ENCODE measurements at regions of chr9 and their contacts with region 1.

Region 1: DNA sequence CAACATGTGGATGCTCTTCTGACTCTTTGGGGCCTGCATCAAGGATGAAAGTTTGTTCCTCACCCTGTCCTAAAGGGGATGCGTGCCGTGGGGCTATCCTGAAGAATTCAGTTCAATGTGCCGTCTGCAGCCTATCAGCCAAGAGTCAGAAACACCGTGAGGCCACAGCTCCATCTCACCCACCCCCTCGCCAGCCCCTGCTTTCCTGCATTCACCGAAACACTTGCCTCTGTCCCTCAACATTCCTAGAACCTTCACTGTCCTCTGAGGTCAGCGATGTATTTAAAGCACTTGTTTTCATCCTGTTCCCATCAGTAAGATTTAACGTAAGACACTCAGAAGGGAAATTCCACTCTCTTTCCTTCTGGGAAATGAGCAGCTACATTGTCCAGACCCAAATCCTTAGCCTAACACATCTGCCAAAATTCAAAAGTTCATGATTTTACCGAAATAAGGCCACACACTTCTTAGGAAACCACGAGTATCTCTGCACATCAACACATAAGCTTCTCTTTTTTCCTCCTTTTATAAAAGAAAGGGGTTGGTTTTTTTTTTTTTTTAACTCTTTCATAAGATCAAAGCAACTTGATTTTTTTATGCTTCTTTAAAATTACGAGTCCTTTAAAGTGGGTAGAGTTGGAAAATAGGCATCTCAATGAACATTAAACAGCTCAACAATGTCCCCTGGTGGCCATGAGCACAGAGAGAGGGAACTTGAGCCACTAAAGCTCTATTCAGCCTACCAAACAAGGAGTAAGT is 100.7 kb downstream of the SUSD1 start:
- DNase-seq: peak; percentile 34 to 82 (median 70)
- ATAC-seq: peak; percentile 91
- H3K4me3 ChIP-seq: no peak overlapping the region
- H3K4me3 Mint-ChIP-seq: peak overlapping the region; percentile 57
- H3K27ac ChIP-seq: no peak overlapping the region
- H3K27ac Mint-ChIP-seq: peak overlapping the region; percentile 60
- H3K4me1 ChIP-seq: peaks cover 12% of the 10 kb centered on the region
- H3K4me1 Mint-ChIP-seq: peaks cover 18% of the 10 kb centered on the region
- H3K27me3 ChIP-seq: no peaks in the 10 kb centered on the region
- H3K27me3 Mint-ChIP-seq: no peaks in the 10 kb centered on the region
- CTCF ChIP-seq: peak; percentile 96

Region 2: DNA sequence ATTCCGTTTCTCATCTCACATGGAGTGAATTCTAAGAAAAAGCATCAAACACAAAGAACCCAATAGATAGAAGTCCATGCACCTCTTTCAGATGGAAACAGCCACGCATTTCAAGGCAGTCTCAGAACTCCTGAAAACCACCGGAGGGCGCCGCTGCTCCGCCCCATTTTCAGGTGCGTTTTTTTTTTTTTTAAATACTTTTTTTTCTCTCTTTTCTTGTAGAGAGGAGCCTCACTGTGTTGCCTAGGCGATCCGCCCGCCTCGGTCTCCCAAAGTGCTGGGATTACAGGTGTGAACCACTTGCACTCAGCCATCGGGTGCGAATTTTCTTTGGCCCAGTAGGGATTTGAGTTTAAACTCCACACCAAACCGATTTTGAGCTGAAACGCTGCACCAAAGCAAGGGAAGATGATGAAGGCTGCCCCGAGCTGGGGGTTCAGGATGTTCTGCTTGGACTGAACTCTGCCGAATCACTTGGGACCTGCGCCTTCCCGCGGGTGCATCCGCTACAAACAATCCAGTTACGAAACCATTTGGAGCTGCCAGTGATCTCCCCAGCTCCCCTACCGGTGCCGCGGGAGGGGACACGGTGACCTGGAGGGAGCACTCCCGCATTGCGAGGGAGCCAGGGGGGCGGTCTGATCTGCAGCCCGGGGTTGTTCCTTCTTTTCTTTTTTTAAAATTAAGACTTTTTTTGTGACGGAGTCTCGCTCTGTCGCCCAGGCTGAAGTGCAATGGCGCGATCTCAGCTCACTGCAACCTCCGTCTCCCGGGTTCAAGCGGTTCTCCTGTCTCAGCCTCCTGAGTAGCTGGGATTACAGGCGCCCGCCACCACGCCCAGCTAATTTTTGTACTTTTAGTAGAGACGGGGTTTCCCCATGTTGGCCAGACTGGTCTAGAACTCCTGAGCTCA is 476.4 kb before region 1 on chr9:
- CTCF ChIA-PET with region 1: interaction called, 20 read pairs
- POLR2A ChIA-PET with region 1: interaction called, 3 read pairs
- intact Hi-C with region 1: loop called (anchors 1 kb)
- DNase-seq: peak; percentile 9 to 80 (median 62)
- ATAC-seq: peak; percentile 75
- H3K4me3 ChIP-seq: peak overlapping the region; percentile 47 to 66
- H3K4me3 Mint-ChIP-seq: peak overlapping the region; percentile 87
- H3K27ac ChIP-seq: no peak overlapping the region
- H3K27ac Mint-ChIP-seq: no peak overlapping the region
- H3K4me1 ChIP-seq: peaks cover 12% of the 10 kb centered on the region
- H3K4me1 Mint-ChIP-seq: peaks cover 19% of the 10 kb centered on the region
- H3K27me3 ChIP-seq: peaks cover 15 to 16% of the 10 kb centered on the region in 2 experiments
- H3K27me3 Mint-ChIP-seq: peaks cover 41% of the 10 kb centered on the region
- CTCF ChIP-seq: peak; percentile 72

Region 3: GRCh38 chr9:111766066-111766465 is 308.4 kb before region 1 on chr9:
- CTCF ChIA-PET with region 1: interaction called, 146 read pairs
- POLR2A ChIA-PET with region 1: interaction called, 6 read pairs
- intact Hi-C with region 1: no loop called
- DNase-seq: no peak
- ATAC-seq: no peak
- H3K4me3 ChIP-seq: no peak overlapping the region
- H3K4me3 Mint-ChIP-seq: no peak overlapping the region
- H3K27ac ChIP-seq: no peak overlapping the region
- H3K27ac Mint-ChIP-seq: no peak overlapping the region
- H3K4me1 ChIP-seq: no peaks in the 10 kb centered on the region
- H3K4me1 Mint-ChIP-seq: no peaks in the 10 kb centered on the region
- H3K27me3 ChIP-seq: no peaks in the 10 kb centered on the region
- H3K27me3 Mint-ChIP-seq: no peaks in the 10 kb centered on the region
- CTCF ChIP-seq: no peak

Region 4: DNA sequence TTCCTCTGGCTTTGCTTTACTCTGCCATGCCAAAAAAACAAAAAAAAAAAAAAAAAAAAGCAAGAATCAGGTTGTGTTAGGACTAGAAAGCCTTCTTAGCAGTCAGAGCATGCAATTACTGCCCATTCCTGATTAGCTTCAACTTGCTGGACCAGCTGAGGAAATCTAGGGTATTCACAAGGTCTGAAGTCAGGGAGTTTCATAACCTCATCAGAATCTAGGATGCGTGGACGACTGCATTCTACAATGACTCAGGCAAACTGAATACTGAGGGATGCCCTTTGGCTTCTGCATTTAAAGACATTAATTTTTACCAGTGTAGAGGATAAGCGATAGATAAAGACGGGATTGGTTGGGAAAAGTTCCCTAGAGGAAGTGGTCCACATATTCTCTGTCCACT is 240.5 kb before region 1 on chr9:
- CTCF ChIA-PET with region 1: interaction called, 12 read pairs
- POLR2A ChIA-PET with region 1: no interaction called
- intact Hi-C with region 1: loop called in 1 of 2 experiments (anchors 2 kb)
- DNase-seq: no peak
- ATAC-seq: no peak
- H3K4me3 ChIP-seq: no peak overlapping the region
- H3K4me3 Mint-ChIP-seq: no peak overlapping the region
- H3K27ac ChIP-seq: no peak overlapping the region
- H3K27ac Mint-ChIP-seq: no peak overlapping the region
- H3K4me1 ChIP-seq: no peaks in the 10 kb centered on the region
- H3K4me1 Mint-ChIP-seq: no peaks in the 10 kb centered on the region
- H3K27me3 ChIP-seq: no peaks in the 10 kb centered on the region
- H3K27me3 Mint-ChIP-seq: peaks cover 10% of the 10 kb centered on the region
- CTCF ChIP-seq: no peak

Region 5: DNA sequence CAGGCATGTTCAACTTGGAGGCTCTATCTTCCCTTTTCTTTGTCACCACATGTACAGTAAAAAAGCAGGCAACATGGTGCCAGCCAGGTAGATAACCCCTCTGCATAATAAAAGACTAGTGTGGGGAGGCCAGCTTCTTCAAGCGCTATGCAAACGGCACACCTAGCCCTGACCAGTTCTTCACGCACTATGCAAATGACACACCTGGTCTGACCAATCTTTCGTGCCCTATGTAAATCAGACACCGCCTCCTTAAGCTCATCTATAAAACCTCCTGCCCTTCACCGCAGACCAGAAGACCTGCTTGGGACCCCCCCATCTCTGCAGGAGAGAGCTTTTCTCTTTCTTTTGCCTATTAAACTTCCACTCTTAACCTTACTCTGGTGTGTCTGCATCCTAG is 206.0 kb before region 1 on chr9:
- CTCF ChIA-PET with region 1: no interaction called
- POLR2A ChIA-PET with region 1: no interaction called
- intact Hi-C with region 1: no loop called
- DNase-seq: no peak
- ATAC-seq: no peak
- H3K4me3 ChIP-seq: no peak overlapping the region
- H3K4me3 Mint-ChIP-seq: no peak overlapping the region
- H3K27ac ChIP-seq: no peak overlapping the region
- H3K27ac Mint-ChIP-seq: no peak overlapping the region
- H3K4me1 ChIP-seq: no peaks in the 10 kb centered on the region
- H3K4me1 Mint-ChIP-seq: peaks cover 7% of the 10 kb centered on the region
- H3K27me3 ChIP-seq: no peaks in the 10 kb centered on the region
- H3K27me3 Mint-ChIP-seq: no peaks in the 10 kb centered on the region
- CTCF ChIP-seq: no peak

Region 6: GRCh38 chr9:112037281-112038016 is 37.0 kb before region 1 on chr9:
- CTCF ChIA-PET with region 1: interaction called, 6 read pairs
- POLR2A ChIA-PET with region 1: no interaction called
- intact Hi-C with region 1: loop called in 1 of 2 experiments (anchors 2 kb)
- DNase-seq: peak; percentile 29 to 88 (median 70)
- ATAC-seq: peak; percentile 96
- H3K4me3 ChIP-seq: no peak overlapping the region
- H3K4me3 Mint-ChIP-seq: peak overlapping the region; percentile 68
- H3K27ac ChIP-seq: peak overlapping the region in 1 of 2 experiments; percentile 4
- H3K27ac Mint-ChIP-seq: peak overlapping the region; percentile 87
- H3K4me1 ChIP-seq: peaks cover 30% of the 10 kb centered on the region
- H3K4me1 Mint-ChIP-seq: peaks cover 59% of the 10 kb centered on the region
- H3K27me3 ChIP-seq: no peaks in the 10 kb centered on the region
- H3K27me3 Mint-ChIP-seq: peaks cover 17% of the 10 kb centered on the region
- CTCF ChIP-seq: no peak

Region 7: DNA sequence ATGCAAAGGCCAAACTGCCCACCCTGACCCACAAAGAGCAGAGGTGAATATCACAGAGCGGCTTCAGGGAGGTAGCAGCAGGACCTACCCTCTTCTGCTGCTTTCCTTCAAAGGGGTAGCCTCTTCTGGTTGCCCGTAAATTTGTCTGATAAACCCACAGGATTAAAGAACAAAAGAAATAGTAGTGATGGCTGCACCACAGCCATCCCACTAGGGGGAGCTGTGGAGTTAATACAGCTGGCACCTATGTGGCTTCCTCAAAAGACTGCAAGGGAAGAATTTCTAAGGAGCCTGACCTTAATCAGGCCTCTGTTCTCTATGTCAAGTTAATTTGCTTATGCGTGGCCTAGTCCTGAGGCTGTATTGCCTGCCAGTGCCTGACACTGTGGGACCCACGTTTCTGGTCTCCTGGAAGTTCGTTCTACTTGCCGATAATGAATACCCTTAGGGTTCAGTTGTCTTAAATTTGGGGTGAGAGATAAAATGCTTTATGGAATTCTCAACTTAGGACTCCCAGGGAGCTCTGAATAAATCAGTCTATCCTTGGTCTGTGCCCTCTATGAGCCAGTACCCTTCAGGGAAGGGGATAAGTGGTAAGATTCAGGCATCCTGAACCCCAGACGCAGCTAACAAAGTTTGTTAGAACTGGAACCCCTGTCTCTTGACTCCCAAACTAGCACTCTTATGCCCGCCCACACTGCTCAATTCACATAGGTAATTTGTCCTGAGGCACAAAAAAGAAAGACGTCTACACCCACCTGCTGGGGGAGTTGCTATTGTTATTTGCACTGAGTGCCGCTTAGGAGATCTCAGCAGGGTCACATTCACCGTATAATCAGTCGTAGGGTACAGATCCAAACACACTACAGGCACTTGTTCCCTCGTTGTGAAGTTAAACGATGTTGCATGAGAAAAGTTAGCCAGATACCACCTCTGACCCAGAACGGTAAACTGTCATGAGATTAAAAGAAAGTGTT is 23.6 kb after region 1 on chr9:
- CTCF ChIA-PET with region 1: interaction called, 13 read pairs
- POLR2A ChIA-PET with region 1: no interaction called
- intact Hi-C with region 1: no loop called
- DNase-seq: peak; percentile 41 to 84 (median 65)
- ATAC-seq: peak; percentile 78
- H3K4me3 ChIP-seq: no peak overlapping the region
- H3K4me3 Mint-ChIP-seq: no peak overlapping the region
- H3K27ac ChIP-seq: no peak overlapping the region
- H3K27ac Mint-ChIP-seq: no peak overlapping the region
- H3K4me1 ChIP-seq: peaks cover 4% of the 10 kb centered on the region
- H3K4me1 Mint-ChIP-seq: peaks cover 20% of the 10 kb centered on the region
- H3K27me3 ChIP-seq: no peaks in the 10 kb centered on the region
- H3K27me3 Mint-ChIP-seq: no peaks in the 10 kb centered on the region
- CTCF ChIP-seq: peak; percentile 89

Region 8: DNA sequence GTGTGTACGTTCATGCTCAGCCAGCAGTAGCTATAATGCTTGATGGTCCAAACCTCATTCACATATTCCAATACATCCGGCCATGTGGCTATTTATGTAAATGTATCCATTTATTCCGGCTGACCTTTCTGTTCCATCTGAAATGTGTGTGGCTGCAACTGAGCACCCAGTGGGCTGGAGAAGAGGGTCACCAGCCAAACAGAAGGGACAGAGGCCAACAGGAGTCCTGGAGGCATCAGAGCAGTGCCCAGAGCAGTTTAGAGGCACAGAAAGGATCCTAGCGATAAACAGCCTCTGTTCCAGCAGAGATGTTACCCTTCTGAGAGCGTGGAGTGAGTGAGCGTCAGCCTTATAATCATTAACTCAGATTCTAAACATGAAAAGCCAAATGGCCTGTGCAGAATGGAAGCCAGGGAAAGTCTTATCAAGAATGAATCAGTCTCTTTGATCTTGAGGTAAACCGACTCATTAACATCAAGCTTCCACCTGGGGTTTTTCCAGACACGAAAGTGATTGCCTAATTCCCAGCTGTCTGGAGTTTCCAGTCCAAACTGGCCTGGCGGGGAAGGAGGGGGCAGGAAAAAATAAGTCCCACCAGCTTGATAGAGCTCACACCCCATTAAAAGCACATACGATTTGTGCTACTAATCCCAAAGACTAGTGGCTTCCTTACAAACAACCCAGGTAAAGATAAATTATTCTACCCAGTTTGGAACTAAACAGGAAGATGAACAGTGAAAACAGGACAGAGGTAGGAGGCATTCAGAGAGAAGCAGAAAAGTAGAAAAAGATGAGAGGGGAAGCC is 45.0 kb after region 1 on chr9:
- CTCF ChIA-PET with region 1: no interaction called
- POLR2A ChIA-PET with region 1: no interaction called
- intact Hi-C with region 1: no loop called
- DNase-seq: no peak
- ATAC-seq: no peak
- H3K4me3 ChIP-seq: no peak overlapping the region
- H3K4me3 Mint-ChIP-seq: no peak overlapping the region
- H3K27ac ChIP-seq: no peak overlapping the region
- H3K27ac Mint-ChIP-seq: no peak overlapping the region
- H3K4me1 ChIP-seq: no peaks in the 10 kb centered on the region
- H3K4me1 Mint-ChIP-seq: no peaks in the 10 kb centered on the region
- H3K27me3 ChIP-seq: no peaks in the 10 kb centered on the region
- H3K27me3 Mint-ChIP-seq: no peaks in the 10 kb centered on the region
- CTCF ChIP-seq: no peak

Measured in CD8-positive, alpha-beta T cell (primary cell).